Thyroid gland (tissue), 4 donors: ENCODE measurements at regions of chr17 and their contacts with region 1.

Region 1: GRCh38 chr17:50094753-50095619 is at the start of gene PDK2:
- DNase-seq: peak; percentile 97 to 98
- H3K4me3 ChIP-seq: peak within 1 kb of the TSS; percentile 57 to 100 (median 93)
- H3K27ac ChIP-seq: peak within 1 kb of the TSS; percentile 76 to 83 (median 82)
- H3K4me1 ChIP-seq: peaks cover 16 to 29% of the 10 kb centered on the region in 2 donors
- H3K27me3 ChIP-seq: no peaks in the 10 kb centered on the region
- CTCF ChIP-seq: peak in 1 of 6 experiments; percentile 28
- POLR2A ChIP-seq: peak in 1 of 2 donors; percentile 84
- total RNA-seq, gene PDK2: 42.5 to 79.3 (median 64.5) TPM

Region 2: DNA sequence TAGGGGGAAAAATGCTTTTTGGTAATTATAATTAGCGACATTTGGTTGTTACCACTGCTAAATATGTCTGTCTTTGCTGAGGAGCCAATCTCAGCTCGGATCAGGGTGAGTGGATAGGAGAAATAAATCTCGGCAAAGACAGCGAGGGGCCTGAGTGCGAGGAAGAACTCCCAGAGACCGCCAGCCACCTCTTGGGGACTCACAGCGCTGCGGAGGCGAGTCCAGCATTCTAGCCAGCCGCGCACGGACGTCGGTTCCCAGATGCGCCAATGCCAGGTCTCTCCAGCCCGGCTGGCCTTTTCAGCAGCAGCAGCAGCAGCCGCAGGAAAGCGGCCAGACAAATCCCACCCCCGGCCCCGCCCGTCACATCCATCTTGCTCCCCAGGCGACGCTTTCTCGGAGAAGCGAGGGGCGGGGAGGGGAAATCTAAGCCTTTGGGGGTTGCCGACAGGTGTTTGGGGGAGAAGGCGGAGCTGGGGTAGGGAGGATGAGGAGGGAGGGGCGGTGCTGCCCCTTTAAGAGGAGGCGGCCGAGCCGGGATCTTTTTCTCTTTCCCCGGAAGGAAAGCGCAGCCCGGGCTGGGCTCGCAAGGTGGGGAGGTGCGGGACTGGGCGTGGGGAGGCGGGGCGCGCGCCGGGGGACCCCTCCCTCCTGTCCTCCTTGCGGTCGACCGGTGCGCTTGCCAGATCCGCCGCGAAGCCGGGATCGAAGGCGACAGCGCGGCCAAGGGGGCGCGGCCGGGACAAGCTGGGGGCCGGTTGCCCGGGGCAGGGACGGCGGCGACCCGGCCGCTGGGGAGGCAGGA is 39.4 kb before region 1 on chr17 and contains the start of gene ITGA3:
- intact Hi-C with region 1: no loop called
- DNase-seq: peak; percentile 93 to 94
- H3K4me3 ChIP-seq: peak within 1 kb of the TSS; percentile 87 to 95 (median 91)
- H3K27ac ChIP-seq: peak within 1 kb of the TSS; percentile 92 to 99 (median 93)
- H3K4me1 ChIP-seq: peaks cover 26 to 73% of the 10 kb centered on the region in 2 donors
- H3K27me3 ChIP-seq: no peaks in the 10 kb centered on the region
- CTCF ChIP-seq: peak in 2 of 6 experiments; percentile 4 to 21
- POLR2A ChIP-seq: peak; percentile 54 to 83
- total RNA-seq, gene ITGA3: 145 to 246 (median 172) TPM

Region 3: DNA sequence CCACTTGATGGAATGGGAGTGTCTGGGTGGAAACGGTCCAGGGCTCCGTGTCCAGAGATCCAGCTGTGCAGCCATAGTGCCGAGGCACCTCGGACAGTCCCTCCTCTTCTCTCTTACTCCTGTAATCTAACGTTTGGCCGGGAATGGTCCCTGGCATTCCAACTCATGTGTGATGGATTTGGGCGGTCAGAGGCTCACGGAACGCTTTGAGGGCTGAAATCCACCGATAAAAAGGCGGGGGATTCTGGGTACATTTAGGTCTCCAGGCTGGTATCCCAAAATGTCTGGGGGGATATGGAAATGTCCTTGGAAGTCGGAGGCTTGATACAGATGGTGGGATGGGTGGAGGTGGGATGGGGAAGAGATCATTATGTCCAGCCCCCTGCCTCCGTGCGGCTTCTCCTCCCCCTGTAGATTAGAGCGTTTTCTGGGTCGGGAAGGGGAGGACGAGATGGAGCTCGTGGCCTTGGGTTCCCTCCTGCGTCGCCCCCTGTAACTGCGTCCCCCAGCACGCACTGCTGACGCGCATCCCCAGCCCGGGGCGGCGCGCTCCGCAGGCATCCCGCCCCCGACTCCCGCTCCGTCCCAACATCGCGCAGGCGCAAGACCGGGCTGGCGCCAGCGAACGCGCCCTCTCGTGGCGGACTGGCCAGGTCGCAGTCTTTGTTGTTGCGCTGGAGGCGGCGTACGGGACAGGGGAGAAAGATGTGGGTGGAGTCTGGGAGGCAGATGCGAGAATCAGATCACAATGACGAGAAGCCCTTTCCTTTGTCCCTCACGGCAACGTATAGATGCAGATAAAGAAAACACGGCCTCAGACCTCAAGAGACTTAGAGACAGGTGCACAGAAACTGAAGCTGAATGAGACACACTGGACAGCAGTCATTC is 66.3 kb after region 1 on chr17:
- intact Hi-C with region 1: loop called (anchors 5 kb)
- DNase-seq: peak; percentile 87 to 91
- H3K4me3 ChIP-seq: peak overlapping the region in 2 of 3 donors; percentile 2 to 43
- H3K27ac ChIP-seq: peak overlapping the region in 2 of 3 donors; percentile 27 to 54
- H3K4me1 ChIP-seq: peaks cover 0 to 6% of the 10 kb centered on the region in 2 donors
- H3K27me3 ChIP-seq: no peaks in the 10 kb centered on the region
- CTCF ChIP-seq: peak; percentile 65 to 97 (median 86)
- POLR2A ChIP-seq: peak in 1 of 2 donors; percentile 37